ENCODE measurements at regions of chr11 and their contacts with region 1.

Region 1: DNA sequence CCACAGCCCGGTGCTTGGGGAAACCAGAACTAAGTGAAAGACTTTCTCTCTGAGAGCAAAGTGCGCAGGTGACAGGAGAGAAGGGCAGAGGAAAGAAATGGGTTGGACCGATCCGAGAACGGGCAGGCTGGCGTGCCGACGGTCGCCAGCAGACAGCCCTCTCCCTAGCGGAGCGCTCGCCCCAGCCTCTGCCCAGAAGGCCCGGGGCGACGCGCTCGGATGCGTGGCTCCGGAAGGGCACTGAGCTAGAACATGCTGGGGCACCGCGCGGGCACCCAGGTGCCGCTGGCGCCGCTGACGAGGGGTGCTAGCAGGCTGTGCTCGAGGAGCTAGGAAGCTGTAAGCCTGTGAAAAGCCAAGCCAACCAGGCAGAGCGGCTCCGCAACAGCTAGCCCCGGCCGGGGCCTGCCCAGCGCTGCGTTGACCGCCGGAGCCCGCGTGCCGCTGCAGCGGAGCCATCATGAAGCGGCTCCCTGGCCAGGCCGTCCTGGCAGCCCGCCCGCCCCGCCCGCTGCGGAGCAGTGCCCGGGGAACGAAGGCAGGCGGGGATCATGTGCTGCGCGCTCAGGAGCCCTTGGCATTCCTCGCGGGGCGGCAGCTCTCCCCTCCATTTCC is 22.1 kb upstream of the RRAS2 start:
- DNase-seq: peak; percentile 73
- H3K4me3 Mint-ChIP-seq: peak overlapping the region; percentile 76
- H3K27ac Mint-ChIP-seq: peak overlapping the region; percentile 75
- H3K4me1 Mint-ChIP-seq: peaks cover 15% of the 10 kb centered on the region
- H3K27me3 Mint-ChIP-seq: no peaks in the 10 kb centered on the region
- CTCF ChIP-seq: no peak

Region 2: DNA sequence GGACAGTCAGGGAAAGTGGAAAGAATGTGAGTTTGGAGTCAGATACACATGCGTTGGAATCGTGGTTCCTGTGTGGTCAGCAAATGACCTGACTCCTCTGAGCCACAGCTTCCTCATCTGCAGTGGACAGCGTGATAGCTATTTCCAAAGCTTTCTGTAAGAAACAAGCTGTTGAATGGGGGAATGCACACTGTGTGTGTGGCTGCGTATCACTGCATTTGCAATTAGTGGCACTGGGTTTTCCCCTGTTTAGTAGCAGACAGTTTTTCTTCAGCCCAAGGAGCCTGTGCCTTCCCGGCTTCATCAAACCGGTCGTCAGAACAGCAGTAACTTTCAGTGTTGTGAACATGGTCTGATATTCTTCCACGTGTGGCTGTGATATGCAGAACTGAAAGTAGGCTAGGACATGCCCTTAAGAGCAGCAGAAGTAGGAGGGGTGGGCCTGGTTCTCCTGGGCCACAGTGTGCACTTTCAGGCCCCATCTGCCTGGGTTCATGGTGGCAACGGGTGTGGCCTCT is 143.6 kb before region 1 on chr11:
- CTCF ChIA-PET with region 1: no interaction called
- POLR2A ChIA-PET with region 1: no interaction called
- intact Hi-C with region 1: no loop called
- DNase-seq: no peak
- H3K4me3 Mint-ChIP-seq: no peak overlapping the region
- H3K27ac Mint-ChIP-seq: no peak overlapping the region
- H3K4me1 Mint-ChIP-seq: no peaks in the 10 kb centered on the region
- H3K27me3 Mint-ChIP-seq: peaks cover 71% of the 10 kb centered on the region
- CTCF ChIP-seq: no peak

Region 3: GRCh38 chr11:14396273-14396672 is 15.2 kb after region 1 on chr11:
- CTCF ChIA-PET with region 1: no interaction called
- POLR2A ChIA-PET with region 1: interaction called, 11 read pairs
- intact Hi-C with region 1: no loop called
- DNase-seq: no peak
- H3K4me3 Mint-ChIP-seq: no peak overlapping the region
- H3K27ac Mint-ChIP-seq: no peak overlapping the region
- H3K4me1 Mint-ChIP-seq: peaks cover 15% of the 10 kb centered on the region
- H3K27me3 Mint-ChIP-seq: no peaks in the 10 kb centered on the region
- CTCF ChIP-seq: no peak